ENCODE measurements at regions of chrX and their contacts with region 1.

Region 1: GRCh38 chrX:149504915-149505651 is at the start of gene IDS:
- DNase-seq: peak; percentile 92
- H3K4me3 ChIP-seq: peak within 1 kb of the TSS; percentile 48 to 81 (median 56)
- H3K27ac ChIP-seq: peak within 1 kb of the TSS; percentile 87 to 95 (median 92)
- H3K4me1 ChIP-seq: peaks cover 0 to 11% (median 3%) of the 10 kb centered on the region in 4 donors
- H3K27me3 ChIP-seq: no peaks in the 10 kb centered on the region
- CTCF ChIP-seq: no peak
- EP300 ChIP-seq: no peak
- POLR2A ChIP-seq: peak; percentile 95
- total RNA-seq, gene IDS: 52.5 to 137 (median 59.2) TPM

Region 2: DNA sequence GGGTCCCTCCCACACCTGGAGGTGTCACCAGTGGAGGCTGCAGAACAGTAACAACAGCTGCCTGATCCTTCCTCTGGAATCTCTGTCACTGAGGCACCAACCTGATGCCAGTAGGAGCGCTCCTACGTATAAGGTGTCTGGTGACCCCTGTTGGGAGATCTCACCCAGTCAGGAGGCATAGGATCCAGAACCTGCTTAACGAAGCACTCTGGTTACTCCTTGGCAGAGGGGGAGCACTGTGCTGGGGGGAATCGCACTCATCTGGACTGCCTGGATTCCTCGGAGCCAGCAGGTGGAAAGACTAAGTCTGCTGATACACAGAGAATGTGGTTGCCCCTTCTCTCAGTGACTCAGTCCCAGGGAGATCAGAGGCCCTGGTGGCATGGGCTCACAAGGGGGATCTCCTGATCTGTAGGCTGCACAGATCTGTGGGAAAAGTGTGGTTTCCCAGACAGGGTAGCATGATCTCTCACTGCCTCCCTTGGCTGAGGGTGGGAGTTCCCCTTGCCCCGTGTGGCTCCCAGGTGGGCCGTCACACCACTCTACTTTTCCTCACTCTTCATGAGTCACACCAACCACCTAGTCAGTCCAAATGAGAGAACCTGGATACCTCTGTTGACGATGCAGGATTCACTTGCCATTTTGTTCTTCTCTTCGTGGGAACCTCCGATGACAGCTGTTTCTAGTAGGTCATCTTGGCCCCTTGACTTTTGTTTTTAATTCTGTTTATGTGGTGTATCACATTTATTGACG is 305.9 kb before region 1 on chrX:
- in situ Hi-C with region 1: no loop called
- intact Hi-C with region 1: no loop called
- DNase-seq: no peak
- H3K4me3 ChIP-seq: no peak overlapping the region
- H3K27ac ChIP-seq: no peak overlapping the region
- H3K4me1 ChIP-seq: no peaks in the 10 kb centered on the region
- H3K27me3 ChIP-seq: no peaks in the 10 kb centered on the region
- CTCF ChIP-seq: no peak
- EP300 ChIP-seq: no peak
- POLR2A ChIP-seq: no peak

Region 3: DNA sequence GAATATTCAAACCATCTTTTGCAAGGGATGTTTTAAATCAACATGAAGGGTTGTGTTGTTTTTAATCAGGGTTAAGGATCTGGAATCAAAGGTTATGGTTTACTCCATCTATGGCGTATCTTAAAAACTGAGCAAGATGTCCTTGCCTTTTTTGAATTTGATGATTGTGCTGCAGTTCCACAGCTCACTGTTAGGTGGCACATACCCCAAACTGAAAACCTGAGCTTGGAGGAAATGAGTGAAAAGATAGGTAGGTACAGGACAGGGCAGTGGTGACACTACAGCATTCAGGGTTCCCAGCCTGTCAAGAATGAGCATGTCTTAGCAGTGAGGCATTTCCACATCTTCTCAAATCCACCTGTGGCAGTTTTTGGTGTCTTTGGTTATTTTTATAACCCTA is 22.6 kb after region 1 on chrX:
- in situ Hi-C with region 1: no loop called
- intact Hi-C with region 1: no loop called
- DNase-seq: no peak
- H3K4me3 ChIP-seq: no peak overlapping the region
- H3K27ac ChIP-seq: no peak overlapping the region
- H3K4me1 ChIP-seq: peaks cover 0 to 2% (median 0%) of the 10 kb centered on the region in 4 donors
- H3K27me3 ChIP-seq: no peaks in the 10 kb centered on the region
- CTCF ChIP-seq: peak; percentile 37 to 51 (median 39)
- EP300 ChIP-seq: no peak
- POLR2A ChIP-seq: no peak

Region 4: DNA sequence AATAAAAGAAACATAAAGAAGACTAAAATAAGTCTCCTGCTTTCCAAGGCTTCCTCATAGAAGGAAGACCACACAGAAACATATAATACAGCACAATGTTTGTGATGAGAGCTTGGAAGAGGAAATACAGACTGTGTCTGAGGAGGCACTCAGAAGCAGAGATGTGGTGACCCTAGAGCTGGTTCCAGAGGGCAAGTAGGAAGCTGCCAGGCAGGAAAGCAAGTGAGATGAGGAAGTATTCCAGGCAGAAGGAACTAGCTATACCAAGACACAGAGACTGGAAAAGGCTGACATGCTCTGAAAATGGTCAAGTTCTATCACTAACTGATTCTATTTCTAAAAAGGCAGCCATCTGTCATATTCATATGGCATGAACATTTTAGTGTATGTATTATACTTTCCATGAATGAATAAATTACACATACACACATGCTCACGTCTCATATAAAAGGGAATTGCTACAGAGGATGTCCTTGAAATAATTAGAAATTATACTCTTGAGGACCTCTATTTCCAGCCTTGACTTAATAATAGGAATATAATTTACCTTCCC is 106.6 kb after region 1 on chrX:
- in situ Hi-C with region 1: loop called in 2 of 4 experiments (anchors 25 kb)
- intact Hi-C with region 1: no loop called
- DNase-seq: no peak
- H3K4me3 ChIP-seq: no peak overlapping the region
- H3K27ac ChIP-seq: no peak overlapping the region
- H3K4me1 ChIP-seq: no peaks in the 10 kb centered on the region
- H3K27me3 ChIP-seq: no peaks in the 10 kb centered on the region
- CTCF ChIP-seq: no peak
- EP300 ChIP-seq: no peak
- POLR2A ChIP-seq: no peak

Region 5: DNA sequence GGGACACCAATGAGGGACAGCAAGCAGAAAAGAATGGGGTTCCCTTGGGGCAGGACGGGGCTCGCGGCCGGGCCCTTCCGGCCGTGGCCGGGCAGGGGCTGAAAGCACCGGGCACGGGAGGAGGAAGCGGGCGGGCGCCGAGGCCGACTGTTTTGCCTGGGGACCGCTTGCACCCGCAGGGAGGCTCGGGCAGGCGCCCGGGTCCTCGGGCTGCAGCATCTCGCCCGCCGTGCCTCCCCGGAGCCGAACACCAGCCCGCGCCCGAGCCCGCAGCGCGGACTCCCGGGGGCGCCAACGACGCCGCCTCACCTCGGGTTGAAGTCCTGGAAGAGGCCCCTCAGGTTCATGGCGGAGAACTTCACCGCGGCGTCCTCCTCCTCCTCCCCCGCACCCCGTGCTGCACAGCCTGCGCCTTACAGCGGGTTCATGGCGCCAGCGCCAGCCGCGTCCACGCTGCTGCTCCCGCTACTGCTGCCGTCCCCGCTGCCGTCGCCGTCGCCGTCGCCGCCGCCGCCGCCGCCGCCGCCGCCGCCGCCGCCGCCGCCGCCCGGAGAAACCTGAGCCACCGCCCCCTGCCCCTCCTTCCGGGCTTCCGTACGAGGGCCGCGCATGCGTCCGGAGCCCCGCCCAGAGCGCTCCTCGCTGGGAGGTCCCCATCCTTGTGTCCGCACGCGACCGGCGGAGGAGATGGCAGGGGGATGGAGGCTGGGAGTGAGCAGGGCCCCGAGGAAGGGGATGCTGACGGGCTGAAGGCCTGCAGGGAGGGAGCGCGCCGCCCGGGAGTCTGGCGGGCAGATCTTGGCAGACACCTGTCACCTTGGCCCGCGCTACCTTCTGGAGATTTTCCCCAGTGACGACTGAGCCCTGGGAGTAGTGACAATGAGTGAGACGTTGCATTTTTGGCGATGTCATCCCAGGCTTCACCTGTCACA is 126.4 kb after region 1 on chrX and contains the start of gene TMEM185A:
- in situ Hi-C with region 1: loop called in 1 of 4 experiments (anchors 25 kb)
- intact Hi-C with region 1: no loop called
- DNase-seq: peak; percentile 79
- H3K4me3 ChIP-seq: peak within 1 kb of the TSS; percentile 65 to 87 (median 80)
- H3K27ac ChIP-seq: peak within 1 kb of the TSS; percentile 80 to 86 (median 84)
- H3K4me1 ChIP-seq: peaks cover 0 to 15% (median 0%) of the 10 kb centered on the region in 4 donors
- H3K27me3 ChIP-seq: no peaks in the 10 kb centered on the region
- CTCF ChIP-seq: no peak
- EP300 ChIP-seq: no peak
- POLR2A ChIP-seq: no peak
- total RNA-seq, gene TMEM185A: 2.2 to 26.8 (median 12.0) TPM

Measured in transverse colon (tissue), 4 donors.